IMR-90 (cell line): ENCODE measurements at regions of chr7 and their contacts with region 1.

Region 1: DNA sequence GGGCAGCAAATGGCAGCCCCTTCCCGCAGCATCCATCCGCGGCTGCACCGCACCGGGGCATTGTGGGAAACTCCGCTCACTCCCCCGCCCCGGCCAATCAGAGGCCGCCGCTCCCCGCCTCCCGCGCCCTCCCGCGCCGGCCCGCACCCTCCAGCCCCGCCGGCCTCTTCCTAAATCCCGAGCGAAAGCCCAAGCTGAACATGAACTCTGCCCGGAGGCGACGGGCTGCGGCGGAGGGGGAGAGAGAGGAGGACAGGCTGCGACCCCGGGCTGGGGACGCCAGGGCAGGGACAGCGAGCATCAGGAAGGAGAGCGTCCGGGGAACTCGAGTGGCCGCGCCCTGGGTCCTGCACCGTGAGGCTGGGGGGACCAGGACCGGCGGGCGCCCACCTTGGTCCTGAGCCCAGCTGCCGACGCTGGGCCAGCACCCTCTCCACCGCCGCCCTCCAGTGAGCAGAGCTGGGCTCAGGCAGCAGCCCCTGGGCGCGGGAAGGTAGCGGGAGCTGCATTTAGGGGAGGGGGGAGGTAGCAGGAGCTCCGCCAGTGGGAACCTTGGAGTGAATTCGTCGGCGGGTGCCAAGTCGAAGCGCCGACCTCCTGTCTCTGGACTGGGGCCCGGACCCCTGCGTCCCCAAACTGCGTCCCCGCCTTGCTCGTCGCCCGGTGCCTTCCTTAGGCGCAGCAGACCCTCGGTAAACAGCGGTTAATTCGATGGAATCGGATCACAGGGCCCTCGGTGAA is at the start of gene DGKI:
- DNase-seq: no peak
- ATAC-seq: peak; percentile 82
- H3K4me3 ChIP-seq: peak within 1 kb of the TSS; percentile 37
- H3K27ac ChIP-seq: no peak within 1 kb of the TSS
- H3K4me1 ChIP-seq: peaks cover 12% of the 10 kb centered on the region; the same call in 1 of the 2 replicates
- H3K27me3 ChIP-seq: no peaks in the 10 kb centered on the region; the same call in 1 of the 2 replicates
- CTCF ChIP-seq: no peak
- POLR2A ChIP-seq: no peak
- RAD21 ChIP-seq: no peak
- total RNA-seq, gene DGKI: 15.3 and 15.8 TPM in 2 replicates

Region 2: DNA sequence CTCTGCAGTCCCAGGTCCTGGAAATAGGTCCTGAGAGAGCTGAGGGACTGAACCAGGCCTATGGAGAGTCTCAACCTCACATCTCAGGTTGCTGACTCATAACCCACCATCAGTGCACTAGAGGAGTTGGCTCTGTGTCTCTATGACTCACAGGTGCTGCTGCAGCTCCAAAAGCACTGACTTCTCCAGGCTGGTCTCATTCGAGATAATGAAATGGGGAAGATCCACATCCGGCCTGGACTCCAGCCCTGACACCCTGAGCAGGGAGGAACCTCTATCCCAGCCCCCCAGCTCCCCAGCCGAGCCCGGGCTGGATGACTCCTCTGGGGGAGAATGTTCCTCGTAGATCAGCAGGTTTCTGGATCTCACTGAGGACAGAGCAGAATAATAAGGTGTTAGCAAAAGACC is 35.3 kb after region 1 on chr7:
- CTCF ChIA-PET with region 1: no interaction called
- POLR2A ChIA-PET with region 1: no interaction called
- dilution Hi-C with region 1: no loop called
- in situ Hi-C with region 1: no loop called
- intact Hi-C with region 1: loop called (anchors 5 kb)
- DNase-seq: peak; percentile 100
- ATAC-seq: peak; percentile 85
- H3K4me3 ChIP-seq: no peak overlapping the region
- H3K27ac ChIP-seq: peak overlapping the region; percentile 32
- H3K4me1 ChIP-seq: peaks cover 18% of the 10 kb centered on the region
- H3K27me3 ChIP-seq: no peaks in the 10 kb centered on the region
- CTCF ChIP-seq: no peak
- POLR2A ChIP-seq: peak; percentile 58
- RAD21 ChIP-seq: peak; percentile 35

Region 3: GRCh38 chr7:138267934-138268333 is 420.9 kb after region 1 on chr7:
- CTCF ChIA-PET with region 1: no interaction called
- POLR2A ChIA-PET with region 1: no interaction called
- dilution Hi-C with region 1: no loop called
- in situ Hi-C with region 1: no loop called
- intact Hi-C with region 1: no loop called
- DNase-seq: no peak
- ATAC-seq: no peak
- H3K4me3 ChIP-seq: no peak overlapping the region
- H3K27ac ChIP-seq: no peak overlapping the region
- H3K4me1 ChIP-seq: no peaks in the 10 kb centered on the region
- H3K27me3 ChIP-seq: no peaks in the 10 kb centered on the region
- CTCF ChIP-seq: no peak
- POLR2A ChIP-seq: no peak
- RAD21 ChIP-seq: no peak